H1 (cell line): ENCODE measurements at regions of chr2 and their contacts with region 1.

Region 1: DNA sequence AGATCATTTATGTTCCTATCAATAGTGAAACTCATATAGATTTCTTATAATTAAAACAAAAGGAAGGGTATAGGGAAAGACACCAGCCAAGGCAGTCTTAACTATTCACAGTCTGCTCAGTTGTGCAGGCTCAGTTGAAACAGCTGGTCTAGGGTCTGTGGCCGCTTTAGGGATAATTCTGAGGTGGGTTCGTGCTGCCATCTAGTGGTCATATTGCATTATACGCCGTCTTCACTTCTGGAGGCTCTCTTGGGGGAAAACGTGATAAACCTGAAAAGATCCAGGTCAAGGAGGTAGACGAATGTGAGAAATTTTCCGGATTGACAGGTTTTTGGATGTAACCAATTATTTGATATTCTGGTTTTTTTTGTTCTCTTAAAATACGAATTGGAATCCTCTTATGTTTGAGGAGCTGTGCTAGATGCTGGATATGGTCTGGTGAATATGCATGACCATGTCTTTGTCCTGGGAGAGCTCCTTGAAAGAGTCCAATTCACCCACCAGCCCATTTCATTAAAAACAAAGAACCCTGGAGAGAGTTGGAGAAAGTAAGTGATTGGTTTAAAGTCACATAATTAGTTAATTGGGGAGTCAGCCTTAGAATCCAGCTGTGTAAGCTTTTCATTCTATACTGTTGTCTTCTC is 492.4 kb downstream of the PLCL1 start:
- DNase-seq: peak; percentile 53 to 70
- H3K4me3 ChIP-seq: peak overlapping the region in 1 of 4 experiments; percentile 44; a peak in 1 of 8 replicates
- H3K27ac ChIP-seq: no peak overlapping the region
- H3K4me1 ChIP-seq: no peaks in the 10 kb centered on the region
- H3K27me3 ChIP-seq: no peaks in the 10 kb centered on the region
- CTCF ChIP-seq: peak; percentile 39 to 82 (median 69)
- EP300 ChIP-seq: no peak
- POLR2A ChIP-seq: no peak
- RAD21 ChIP-seq: peak; percentile 94 to 97

Region 2: DNA sequence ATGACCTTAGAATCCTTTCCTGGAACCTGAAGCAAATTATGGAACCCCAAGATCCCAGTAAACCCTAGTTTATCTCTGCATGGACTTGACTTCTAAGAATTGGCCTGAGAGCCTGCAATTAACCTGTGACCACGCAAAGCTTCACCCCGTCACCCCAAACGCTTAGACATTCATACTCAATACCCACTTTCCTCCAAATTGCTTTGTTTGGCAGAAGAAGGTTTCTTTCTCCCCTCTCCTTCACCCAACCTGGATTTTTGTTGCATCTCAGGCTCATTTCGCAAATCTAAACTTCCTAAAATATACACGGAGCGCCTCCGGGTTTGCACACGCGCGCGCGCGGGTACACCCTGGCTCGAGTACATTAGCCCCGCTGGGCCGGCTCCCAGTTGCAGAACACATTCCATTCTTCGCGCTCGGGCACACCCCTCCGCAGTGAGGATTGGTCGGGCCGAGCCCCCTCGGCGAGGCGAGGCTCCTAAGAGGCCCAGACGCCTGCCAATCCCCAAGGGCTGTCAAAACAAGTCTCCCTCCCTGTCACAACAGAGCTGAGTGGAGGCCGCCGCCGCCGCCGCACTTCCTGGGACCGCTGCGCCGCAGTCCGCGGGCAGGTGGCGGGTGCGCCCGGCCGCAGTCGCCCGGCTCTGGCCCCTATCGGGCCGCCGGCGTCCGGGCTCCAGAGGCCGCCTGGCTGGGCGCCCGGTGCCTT is 492.6 kb before region 1 on chr2 and contains the start of gene PLCL1:
- CTCF ChIA-PET with region 1: interaction called, 23 read pairs
- POLR2A ChIA-PET with region 1: no interaction called
- DNase-seq: peak; percentile 63 to 92
- H3K4me3 ChIP-seq: peak within 1 kb of the TSS; percentile 36 to 74 (median 54)
- H3K27ac ChIP-seq: no peak within 1 kb of the TSS
- H3K4me1 ChIP-seq: peaks cover 0 to 9% (median 2%) of the 10 kb centered on the region in 4 experiments; a peak in 3 of 7 replicates
- H3K27me3 ChIP-seq: peaks cover 9 to 22% (median 16%) of the 10 kb centered on the region in 4 experiments
- CTCF ChIP-seq: no peak; a peak in 1 of 4 replicates
- EP300 ChIP-seq: no peak
- POLR2A ChIP-seq: no peak
- RAD21 ChIP-seq: no peak
- total RNA-seq, gene PLCL1: not detected in 2 replicates

Region 3: GRCh38 chr2:198168656-198169055 is 128.1 kb before region 1 on chr2:
- CTCF ChIA-PET with region 1: interaction called, 12 read pairs
- POLR2A ChIA-PET with region 1: no interaction called
- DNase-seq: no peak
- H3K4me3 ChIP-seq: no peak overlapping the region
- H3K27ac ChIP-seq: no peak overlapping the region
- H3K4me1 ChIP-seq: no peaks in the 10 kb centered on the region
- H3K27me3 ChIP-seq: no peaks in the 10 kb centered on the region
- CTCF ChIP-seq: no peak
- EP300 ChIP-seq: no peak
- POLR2A ChIP-seq: no peak
- RAD21 ChIP-seq: no peak

Region 4: GRCh38 chr2:198277181-198277580 is 19.6 kb before region 1 on chr2:
- CTCF ChIA-PET with region 1: interaction called, 10 read pairs
- POLR2A ChIA-PET with region 1: no interaction called
- DNase-seq: no peak
- H3K4me3 ChIP-seq: no peak overlapping the region
- H3K27ac ChIP-seq: no peak overlapping the region
- H3K4me1 ChIP-seq: no peaks in the 10 kb centered on the region
- H3K27me3 ChIP-seq: peaks cover 0 to 1% (median 0%) of the 10 kb centered on the region in 4 experiments; a peak in 1 of 7 replicates
- CTCF ChIP-seq: no peak
- EP300 ChIP-seq: no peak
- POLR2A ChIP-seq: no peak
- RAD21 ChIP-seq: no peak

Region 5: GRCh38 chr2:198571393-198571792 is 274.6 kb after region 1 on chr2:
- CTCF ChIA-PET with region 1: no interaction called
- POLR2A ChIA-PET with region 1: no interaction called
- DNase-seq: no peak
- H3K4me3 ChIP-seq: no peak overlapping the region
- H3K27ac ChIP-seq: no peak overlapping the region
- H3K4me1 ChIP-seq: no peaks in the 10 kb centered on the region
- H3K27me3 ChIP-seq: no peaks in the 10 kb centered on the region
- CTCF ChIP-seq: no peak
- EP300 ChIP-seq: no peak
- POLR2A ChIP-seq: no peak
- RAD21 ChIP-seq: no peak